Naive thymus-derived CD4-positive, alpha-beta T cell (primary cell): ENCODE measurements at regions of chr7 and their contacts with region 1.

Region 1: GRCh38 chr7:157386979-157387800 is 50.4 kb downstream of the DNAJB6 start:
- DNase-seq: peak; percentile 67 to 90 (median 87)
- ATAC-seq: peak; percentile 96
- H3K4me3 ChIP-seq: no peak overlapping the region
- H3K4me3 Mint-ChIP-seq: peak overlapping the region in 7 of 10 donors; percentile 5 to 56 (median 21)
- H3K27ac ChIP-seq: peak overlapping the region; percentile 64
- H3K27ac Mint-ChIP-seq: peak overlapping the region; percentile 48 to 87 (median 72)
- H3K4me1 ChIP-seq: peaks cover 17 to 20% of the 10 kb centered on the region in 2 donors
- H3K4me1 Mint-ChIP-seq: peaks cover 26 to 52% (median 39%) of the 10 kb centered on the region in 7 donors
- H3K27me3 ChIP-seq: no peaks in the 10 kb centered on the region
- H3K27me3 Mint-ChIP-seq: no peaks in the 10 kb centered on the region

Region 2: GRCh38 chr7:156969972-156970420 is 417.2 kb before region 1 on chr7:
- CTCF ChIA-PET with region 1: interaction called, 4 read pairs
- POLR2A ChIA-PET with region 1: no interaction called
- intact Hi-C with region 1: loop called in 1 of 2 experiments (anchors 1 kb)
- DNase-seq: peak in 4 of 9 donors; percentile 11 to 26 (median 16)
- ATAC-seq: peak; percentile 52
- H3K4me3 ChIP-seq: no peak overlapping the region
- H3K4me3 Mint-ChIP-seq: no peak overlapping the region
- H3K27ac ChIP-seq: no peak overlapping the region
- H3K27ac Mint-ChIP-seq: peak overlapping the region in 1 of 9 donors; percentile 59
- H3K4me1 ChIP-seq: no peaks in the 10 kb centered on the region
- H3K4me1 Mint-ChIP-seq: no peaks in the 10 kb centered on the region
- H3K27me3 ChIP-seq: no peaks in the 10 kb centered on the region
- H3K27me3 Mint-ChIP-seq: no peaks in the 10 kb centered on the region

Region 3: DNA sequence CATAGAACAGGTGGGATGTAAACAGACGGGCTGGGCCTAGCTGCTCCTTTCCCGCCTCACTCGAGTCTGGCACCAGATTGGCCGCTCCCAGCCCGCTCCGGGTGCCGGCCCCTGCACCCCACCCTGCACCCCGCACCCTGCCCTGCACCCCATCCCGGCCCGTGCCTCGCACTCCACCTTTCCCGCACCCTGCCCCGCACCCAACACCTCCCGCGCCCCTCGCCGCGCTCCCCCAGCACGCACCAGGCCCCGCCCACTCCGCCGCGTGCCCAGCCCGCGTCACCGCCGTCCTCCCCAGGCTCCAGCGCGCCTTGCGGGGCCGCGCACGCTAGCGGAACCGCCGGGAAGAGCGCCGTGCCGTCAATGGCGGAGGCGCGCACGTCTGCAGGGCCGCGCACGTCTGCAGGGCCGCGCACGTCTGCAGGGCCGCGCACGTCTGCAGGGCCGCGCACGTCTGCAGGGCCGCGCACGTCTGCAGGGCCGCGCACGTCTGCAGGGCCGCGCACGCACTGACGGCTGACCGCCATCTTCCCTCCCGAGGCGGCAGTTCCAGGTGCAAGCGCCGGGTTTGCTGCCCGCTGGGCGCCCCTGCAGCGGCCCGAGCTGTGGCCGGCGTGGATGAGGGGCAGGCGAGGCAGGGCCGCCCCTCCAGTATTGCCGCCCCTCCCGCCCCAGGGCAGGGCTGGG is 248.6 kb before region 1 on chr7 and contains the start of gene UBE3C:
- CTCF ChIA-PET with region 1: no interaction called
- POLR2A ChIA-PET with region 1: no interaction called
- intact Hi-C with region 1: loop called in 1 of 2 experiments (anchors 2 kb)
- DNase-seq: peak; percentile 88 to 96 (median 93)
- ATAC-seq: peak; percentile 91
- H3K4me3 ChIP-seq: peak within 1 kb of the TSS; percentile 82
- H3K4me3 Mint-ChIP-seq: peak within 1 kb of the TSS; percentile 77 to 93 (median 84)
- H3K27ac ChIP-seq: peak within 1 kb of the TSS; percentile 92
- H3K27ac Mint-ChIP-seq: peak within 1 kb of the TSS; percentile 76 to 99 (median 93)
- H3K4me1 ChIP-seq: peaks cover 35 to 43% of the 10 kb centered on the region in 2 donors
- H3K4me1 Mint-ChIP-seq: peaks cover 26 to 45% (median 42%) of the 10 kb centered on the region in 7 donors
- H3K27me3 ChIP-seq: no peaks in the 10 kb centered on the region
- H3K27me3 Mint-ChIP-seq: peaks cover 0 to 2% (median 0%) of the 10 kb centered on the region in 5 donors
- total RNA-seq, gene UBE3C: 41.6 to 64.6 (median 54.9) TPM

Region 4: DNA sequence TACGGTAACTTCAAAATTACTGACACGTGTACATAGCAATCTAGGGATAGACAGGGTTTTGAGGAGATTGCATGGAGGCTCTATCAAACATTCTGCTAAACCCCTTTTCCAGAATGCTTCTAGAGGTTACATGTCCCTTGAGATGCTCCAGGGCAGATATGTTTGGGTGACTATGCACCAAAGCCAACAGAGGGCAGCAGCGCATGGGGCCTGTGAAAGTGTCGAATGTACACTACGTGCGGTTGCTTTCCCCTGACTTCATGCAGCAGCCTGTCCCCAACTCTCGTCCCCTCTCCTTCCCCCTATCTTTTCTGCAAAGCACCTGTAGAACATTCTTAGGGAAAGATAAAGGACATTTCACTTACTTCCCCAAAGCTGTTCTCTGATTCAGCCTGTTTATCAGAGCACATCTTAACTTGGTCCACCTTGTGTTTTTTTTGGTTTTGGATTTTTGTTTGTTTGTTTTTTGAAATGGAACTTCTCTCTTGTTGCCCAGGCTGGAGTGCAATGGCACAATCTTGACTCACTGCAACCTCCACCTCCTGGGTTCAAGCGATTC is 158.2 kb before region 1 on chr7:
- CTCF ChIA-PET with region 1: no interaction called
- POLR2A ChIA-PET with region 1: no interaction called
- intact Hi-C with region 1: loop called (anchors 1 to 2 kb)
- DNase-seq: peak in 5 of 9 donors; percentile 9 to 28 (median 15)
- ATAC-seq: peak; percentile 53
- H3K4me3 ChIP-seq: no peak overlapping the region
- H3K4me3 Mint-ChIP-seq: no peak overlapping the region
- H3K27ac ChIP-seq: no peak overlapping the region
- H3K27ac Mint-ChIP-seq: no peak overlapping the region
- H3K4me1 ChIP-seq: no peaks in the 10 kb centered on the region
- H3K4me1 Mint-ChIP-seq: peaks cover 0 to 4% (median under 1%) of the 10 kb centered on the region in 7 donors
- H3K27me3 ChIP-seq: no peaks in the 10 kb centered on the region
- H3K27me3 Mint-ChIP-seq: no peaks in the 10 kb centered on the region

Region 5: GRCh38 chr7:157250605-157251228 is 136.5 kb before region 1 on chr7:
- CTCF ChIA-PET with region 1: no interaction called
- POLR2A ChIA-PET with region 1: no interaction called
- intact Hi-C with region 1: loop called in 1 of 2 experiments (anchors 5 kb)
- DNase-seq: peak in 7 of 9 donors; percentile 11 to 55 (median 37)
- ATAC-seq: peak; percentile 84
- H3K4me3 ChIP-seq: no peak overlapping the region
- H3K4me3 Mint-ChIP-seq: no peak overlapping the region
- H3K27ac ChIP-seq: no peak overlapping the region
- H3K27ac Mint-ChIP-seq: no peak overlapping the region
- H3K4me1 ChIP-seq: no peaks in the 10 kb centered on the region
- H3K4me1 Mint-ChIP-seq: peaks cover 0 to 5% (median 0%) of the 10 kb centered on the region in 7 donors
- H3K27me3 ChIP-seq: no peaks in the 10 kb centered on the region
- H3K27me3 Mint-ChIP-seq: no peaks in the 10 kb centered on the region